Gastrocnemius medialis (tissue), 4 donors: ENCODE measurements at regions of chr16 and their contacts with region 1.

Region 1: GRCh38 chr16:69339289-69340108 is at the starts of genes COG8 and NIP7:
- DNase-seq: peak; percentile 94 to 96
- ATAC-seq: peak; percentile 99
- H3K4me3 ChIP-seq: peak within 1 kb of the TSS; percentile 81 to 95 (median 90)
- H3K27ac ChIP-seq: peak within 1 kb of the TSS; percentile 81 to 95 (median 94)
- H3K4me1 ChIP-seq: peaks cover 19 to 26% of the 10 kb centered on the region in 2 donors
- H3K27me3 ChIP-seq: no peaks in the 10 kb centered on the region
- CTCF ChIP-seq: peak; percentile 86 to 93 (median 89)
- POLR2A ChIP-seq: peak; percentile 41 to 52
- total RNA-seq, gene COG8: 41.2 to 56.5 (median 52.1) TPM
- total RNA-seq, gene NIP7: 7.3 to 13.5 (median 9.7) TPM

Region 2: DNA sequence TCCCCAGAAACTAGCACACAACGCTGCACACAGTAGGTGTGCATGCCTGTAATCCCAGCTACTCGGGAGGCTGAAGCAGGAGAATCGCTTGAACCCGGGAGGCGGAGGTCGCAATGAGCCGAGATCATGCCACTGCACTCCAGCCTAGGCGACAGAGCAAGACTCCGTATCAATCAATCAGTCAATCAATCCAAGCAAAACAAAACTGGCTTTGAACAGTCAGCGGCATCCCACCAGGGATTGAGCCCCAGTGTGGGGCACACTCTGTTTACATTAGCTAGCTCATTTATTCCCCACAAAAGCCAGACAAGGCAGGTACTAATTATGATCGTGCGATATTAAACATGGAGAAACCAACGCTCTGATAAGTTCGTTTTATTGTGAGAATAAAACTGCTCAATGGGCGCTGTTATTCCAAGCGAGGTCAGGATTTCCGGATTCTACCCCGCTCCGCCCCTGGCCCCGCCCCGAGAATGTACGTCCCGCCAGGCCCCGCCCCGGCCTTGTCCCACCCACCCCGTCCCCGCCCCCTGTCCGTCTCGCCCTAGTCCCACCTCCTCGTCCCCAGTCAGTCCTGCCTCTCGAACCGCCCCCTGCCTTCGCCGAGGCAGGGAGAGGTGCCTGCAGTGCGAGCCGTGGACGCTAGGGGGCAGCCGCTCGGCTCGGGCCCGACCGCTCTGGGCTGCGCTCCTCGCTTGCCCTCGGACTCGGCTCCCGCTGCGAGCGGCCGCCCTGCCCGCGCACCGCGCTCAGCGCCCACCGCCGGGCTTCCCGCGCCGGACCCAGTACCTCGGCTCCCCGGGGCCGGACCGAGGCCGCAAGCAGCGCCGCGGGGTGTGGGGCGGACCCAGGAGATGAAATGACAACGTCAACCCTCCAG is 28.6 kb before region 1 on chr16 and contains the start of gene VPS4A:
- in situ Hi-C with region 1: no loop called
- intact Hi-C with region 1: loop called (anchors 1 kb)
- DNase-seq: peak; percentile 93 to 95
- ATAC-seq: peak; percentile 91 to 96
- H3K4me3 ChIP-seq: peak within 1 kb of the TSS; percentile 74 to 97 (median 76)
- H3K27ac ChIP-seq: peak within 1 kb of the TSS; percentile 81 to 95 (median 90)
- H3K4me1 ChIP-seq: peaks cover 15 to 19% of the 10 kb centered on the region in 2 donors
- H3K27me3 ChIP-seq: no peaks in the 10 kb centered on the region
- CTCF ChIP-seq: peak; percentile 90 to 99 (median 94)
- POLR2A ChIP-seq: peak; percentile 62 to 87
- total RNA-seq, gene VPS4A: 53.3 to 112 (median 70.1) TPM

Region 3: GRCh38 chr16:69386596-69386995 is 47.1 kb after region 1 on chr16:
- in situ Hi-C with region 1: no loop called
- intact Hi-C with region 1: loop called (anchors 2 kb)
- DNase-seq: no peak
- ATAC-seq: no peak
- H3K4me3 ChIP-seq: peak overlapping the region in 1 of 4 donors; percentile 82
- H3K27ac ChIP-seq: peak overlapping the region; percentile 84 to 95 (median 86)
- H3K4me1 ChIP-seq: peaks cover 8 to 12% of the 10 kb centered on the region in 2 donors
- H3K27me3 ChIP-seq: no peaks in the 10 kb centered on the region
- CTCF ChIP-seq: no peak
- POLR2A ChIP-seq: no peak

Region 4: GRCh38 chr16:69410285-69410990 is 70.9 kb after region 1 on chr16:
- in situ Hi-C with region 1: no loop called
- intact Hi-C with region 1: no loop called
- DNase-seq: no peak
- ATAC-seq: no peak
- H3K4me3 ChIP-seq: no peak overlapping the region
- H3K27ac ChIP-seq: peak overlapping the region in 2 of 4 donors; percentile 26 to 45
- H3K4me1 ChIP-seq: peaks cover 4 to 5% of the 10 kb centered on the region in 2 donors
- H3K27me3 ChIP-seq: no peaks in the 10 kb centered on the region
- CTCF ChIP-seq: no peak
- POLR2A ChIP-seq: no peak